Esophagus squamous epithelium (tissue), 5 donors: ENCODE measurements at regions of chr5 and their contacts with region 1.

Region 1: GRCh38 chr5:38556599-38557305 is at the start of gene LIFR:
- DNase-seq: no peak
- H3K4me3 ChIP-seq: peak within 1 kb of the TSS; percentile 80 to 94 (median 86)
- H3K27ac ChIP-seq: peak within 1 kb of the TSS; percentile 90 to 97 (median 92)
- H3K4me1 ChIP-seq: peaks cover 0 to 39% (median 0%) of the 10 kb centered on the region in 3 donors
- H3K27me3 ChIP-seq: peaks cover 0 to 16% (median 0%) of the 10 kb centered on the region in 4 donors
- CTCF ChIP-seq: no peak
- POLR2A ChIP-seq: peak in 2 of 4 donors; percentile 63 to 82
- total RNA-seq, gene LIFR: 3.1 to 72.9 (median 16.9) TPM

Region 2: DNA sequence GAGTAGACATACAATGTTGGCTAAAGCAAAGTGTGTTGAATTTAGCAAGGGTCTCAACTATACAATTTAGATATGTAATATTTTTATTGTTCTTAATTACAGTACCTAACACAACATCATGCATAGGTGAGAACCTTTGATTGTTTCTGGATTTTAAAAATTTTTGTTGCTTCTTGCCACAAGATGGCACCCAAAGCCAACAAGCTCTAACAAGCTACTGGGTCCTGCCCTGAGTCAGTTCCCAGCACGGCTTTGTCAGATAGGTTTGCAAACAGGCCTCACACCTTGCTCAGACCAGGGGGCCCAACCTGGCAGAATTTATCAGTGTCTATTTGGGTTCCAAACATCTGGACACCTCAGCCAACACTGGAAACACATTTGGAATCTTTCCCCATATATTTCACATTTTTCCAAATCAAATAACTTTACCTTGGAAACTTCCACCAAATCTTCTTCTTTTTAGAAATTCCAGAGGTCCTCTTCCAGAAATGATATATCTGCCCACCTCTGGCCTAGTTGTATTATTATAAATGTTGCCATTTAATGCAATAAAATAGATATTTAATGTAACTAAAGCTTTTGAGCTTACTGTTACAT is 347.9 kb before region 1 on chr5:
- intact Hi-C with region 1: no loop called
- DNase-seq: no peak
- H3K4me3 ChIP-seq: no peak overlapping the region
- H3K27ac ChIP-seq: no peak overlapping the region
- H3K4me1 ChIP-seq: no peaks in the 10 kb centered on the region
- H3K27me3 ChIP-seq: peaks cover 0 to 5% (median 0%) of the 10 kb centered on the region in 4 donors
- CTCF ChIP-seq: peak in 2 of 6 experiments; percentile 28 to 43
- POLR2A ChIP-seq: no peak

Region 3: GRCh38 chr5:38809388-38810359 is 252.9 kb after region 1 on chr5:
- intact Hi-C with region 1: loop called (anchors 10 kb)
- DNase-seq: peak; percentile 11
- H3K4me3 ChIP-seq: no peak overlapping the region
- H3K27ac ChIP-seq: peak overlapping the region in 3 of 4 donors; percentile 43 to 53 (median 49)
- H3K4me1 ChIP-seq: peaks cover 0 to 43% (median 4%) of the 10 kb centered on the region in 3 donors
- H3K27me3 ChIP-seq: no peaks in the 10 kb centered on the region
- CTCF ChIP-seq: peak; percentile 45 to 89 (median 76)
- POLR2A ChIP-seq: no peak